PC-9 (cell line): ENCODE measurements at regions of chr5 and their contacts with region 1.

Region 1: DNA sequence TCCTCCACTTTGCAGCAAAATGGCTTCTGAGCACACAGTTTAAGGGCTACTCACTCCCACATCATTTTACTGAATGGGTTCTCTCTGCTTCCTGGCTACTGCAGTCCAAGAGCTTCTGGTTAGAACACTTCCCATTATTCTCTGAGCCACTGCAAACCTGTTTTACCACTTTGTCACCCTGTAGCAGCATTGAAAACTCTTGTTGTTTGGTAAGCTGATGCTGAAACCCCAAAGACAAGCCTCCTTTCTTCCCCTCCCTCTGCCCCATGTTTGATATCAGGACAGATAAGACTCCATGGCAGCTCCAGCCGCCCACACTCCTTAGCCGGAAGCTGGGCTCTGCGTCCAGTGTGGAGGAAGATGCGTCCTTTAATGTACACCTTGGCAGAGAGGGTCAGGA is 84.4 kb upstream of the RARS1 start:
- DNase-seq: peak; percentile 79 to 97
- H3K4me3 ChIP-seq: no peak overlapping the region
- H3K27ac ChIP-seq: peak overlapping the region; percentile 90
- H3K4me1 ChIP-seq: peaks cover 44% of the 10 kb centered on the region
- H3K27me3 ChIP-seq: no peaks in the 10 kb centered on the region
- CTCF ChIP-seq: no peak

Region 2: GRCh38 chr5:168328814-168329213 is 73.1 kb before region 1 on chr5:
- CTCF ChIA-PET with region 1: no interaction called
- POLR2A ChIA-PET with region 1: no interaction called
- intact Hi-C with region 1: loop called (anchors 1 kb)
- DNase-seq: peak in 1 of 2 experiments; percentile 65
- H3K4me3 ChIP-seq: peak overlapping the region; percentile 39; the same call in 1 of the 2 replicates
- H3K27ac ChIP-seq: peak overlapping the region; percentile 78
- H3K4me1 ChIP-seq: peaks cover 99% of the 10 kb centered on the region
- H3K27me3 ChIP-seq: no peaks in the 10 kb centered on the region
- CTCF ChIP-seq: no peak

Region 3: DNA sequence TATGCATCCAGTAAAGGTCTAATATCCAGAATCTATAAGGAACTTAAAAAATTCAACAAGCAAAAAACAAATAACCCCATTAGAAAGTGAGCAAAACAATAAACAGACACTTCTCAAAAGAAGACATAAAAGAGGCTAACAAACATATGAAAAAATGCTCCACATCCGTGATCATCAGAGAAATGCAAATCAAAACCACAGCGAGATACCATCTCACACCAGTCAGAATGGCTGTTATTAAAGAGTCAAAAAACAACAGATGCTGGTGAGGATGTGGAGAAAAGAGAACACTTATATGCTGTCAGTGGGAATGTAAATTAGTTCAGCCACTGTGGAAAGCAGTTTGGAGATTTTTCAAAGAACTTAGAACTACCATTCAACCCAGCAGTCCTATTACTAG is 24.4 kb before region 1 on chr5:
- CTCF ChIA-PET with region 1: no interaction called
- POLR2A ChIA-PET with region 1: no interaction called
- intact Hi-C with region 1: loop called (anchors 2 kb)
- DNase-seq: no peak
- H3K4me3 ChIP-seq: no peak overlapping the region
- H3K27ac ChIP-seq: no peak overlapping the region
- H3K4me1 ChIP-seq: no peaks in the 10 kb centered on the region
- H3K27me3 ChIP-seq: no peaks in the 10 kb centered on the region
- CTCF ChIP-seq: no peak

Region 4: GRCh38 chr5:170132269-170132975 is 1730.5 kb after region 1 on chr5:
- CTCF ChIA-PET with region 1: no interaction called
- POLR2A ChIA-PET with region 1: interaction called, 12 read pairs
- intact Hi-C with region 1: no loop called
- DNase-seq: peak; percentile 37 to 80
- H3K4me3 ChIP-seq: no peak overlapping the region
- H3K27ac ChIP-seq: peak overlapping the region; percentile 78
- H3K4me1 ChIP-seq: peaks cover 57% of the 10 kb centered on the region
- H3K27me3 ChIP-seq: no peaks in the 10 kb centered on the region
- CTCF ChIP-seq: no peak